ENCODE measurements at regions of chr1 and their contacts with region 1.

Region 1: DNA sequence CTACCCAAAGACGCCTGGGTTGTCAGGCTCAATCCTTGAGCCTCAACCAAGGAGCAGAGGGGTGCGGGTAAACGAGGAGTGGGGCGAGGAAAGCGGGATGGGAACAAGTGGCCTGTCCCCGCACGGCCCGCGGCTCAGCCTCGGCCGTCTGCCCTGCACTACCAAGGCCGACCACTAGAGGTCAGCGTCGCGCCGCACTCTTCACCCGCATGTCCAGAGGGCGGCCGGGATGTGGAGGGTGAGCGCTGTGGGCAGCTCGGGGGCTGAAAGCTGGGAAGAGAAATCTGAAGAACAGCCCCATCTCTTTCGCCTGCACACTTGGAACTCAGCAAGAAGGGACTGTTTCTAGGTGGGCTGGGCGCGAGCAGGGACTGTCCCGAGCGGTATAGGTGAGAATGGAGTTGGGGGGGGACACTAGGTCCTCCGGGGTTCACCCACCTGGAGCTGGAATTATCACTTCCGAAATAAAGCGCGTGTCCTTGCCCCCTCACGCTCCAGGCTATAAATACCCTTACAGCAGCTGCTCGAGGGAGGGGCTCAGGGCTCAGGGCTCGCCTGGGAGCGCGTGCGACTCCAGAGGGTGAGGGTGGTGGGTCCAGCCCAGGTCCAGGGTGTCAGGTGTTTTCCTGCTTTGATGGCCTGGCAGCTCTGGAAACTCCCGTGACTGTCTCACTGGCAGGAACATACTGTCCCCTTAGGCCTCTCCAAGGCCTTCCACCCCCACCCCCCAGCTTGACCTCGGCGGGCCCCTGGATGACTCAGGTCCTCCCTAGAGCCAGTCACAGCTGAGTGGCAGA is 9.8 kb downstream of the SLC30A2 start:
- DNase-seq: peak; percentile 84
- ATAC-seq: peak; percentile 73
- H3K4me3 Mint-ChIP-seq: peak overlapping the region; percentile 96
- H3K27ac Mint-ChIP-seq: peak overlapping the region; percentile 78
- H3K4me1 Mint-ChIP-seq: peaks cover 11% of the 10 kb centered on the region
- H3K27me3 Mint-ChIP-seq: peaks cover 6% of the 10 kb centered on the region
- CTCF ChIP-seq: peak; percentile 98

Region 2: DNA sequence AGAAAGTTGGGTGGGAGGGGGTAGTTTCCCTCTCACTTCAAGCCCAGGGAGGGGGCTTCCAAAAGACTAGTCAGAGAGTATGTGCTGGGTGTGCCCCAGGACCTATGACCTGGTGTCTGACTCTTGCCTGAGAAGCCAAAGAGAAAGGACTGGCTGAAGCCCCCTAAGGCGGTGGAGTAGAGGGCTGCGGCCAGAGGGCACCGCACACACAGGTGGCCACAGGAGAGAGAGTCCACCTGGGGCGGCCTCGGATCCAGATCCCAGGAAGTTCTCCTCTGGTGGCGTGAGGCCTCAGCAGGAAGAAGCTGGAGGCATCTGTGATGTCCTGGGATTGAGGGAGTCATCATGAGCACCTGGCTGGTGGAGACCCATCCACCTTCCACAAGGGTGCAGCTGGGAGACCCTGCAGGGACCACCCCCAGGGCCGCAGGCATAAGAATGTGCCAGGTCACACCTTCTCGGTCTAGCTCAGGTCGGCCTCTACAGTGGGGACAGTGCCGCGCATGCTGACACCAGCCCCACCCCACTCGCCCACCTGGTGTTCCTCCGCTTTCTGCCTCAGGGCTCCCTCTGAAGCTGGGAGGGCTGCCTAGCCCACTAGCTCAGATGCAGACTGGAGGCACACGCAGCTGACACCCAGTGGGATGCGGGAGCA is 155.0 kb before region 1 on chr1:
- CTCF ChIA-PET with region 1: no interaction called
- POLR2A ChIA-PET with region 1: no interaction called
- intact Hi-C with region 1: no loop called
- DNase-seq: no peak
- ATAC-seq: no peak
- H3K4me3 Mint-ChIP-seq: no peak overlapping the region
- H3K27ac Mint-ChIP-seq: no peak overlapping the region
- H3K4me1 Mint-ChIP-seq: peaks cover 1% of the 10 kb centered on the region
- H3K27me3 Mint-ChIP-seq: no peaks in the 10 kb centered on the region
- CTCF ChIP-seq: no peak

Region 3: GRCh38 chr1:25997828-25998761 is 38.1 kb before region 1 on chr1 and contains the start of gene PAFAH2:
- CTCF ChIA-PET with region 1: interaction called, 3 read pairs
- POLR2A ChIA-PET with region 1: no interaction called
- intact Hi-C with region 1: loop called (anchors 1 kb)
- DNase-seq: peak; percentile 85
- ATAC-seq: peak; percentile 98
- H3K4me3 Mint-ChIP-seq: peak within 1 kb of the TSS; percentile 95
- H3K27ac Mint-ChIP-seq: peak within 1 kb of the TSS; percentile 95
- H3K4me1 Mint-ChIP-seq: peaks cover 18% of the 10 kb centered on the region
- H3K27me3 Mint-ChIP-seq: no peaks in the 10 kb centered on the region
- CTCF ChIP-seq: peak; percentile 89
- total RNA-seq, gene PAFAH2: 5.4 and 9.2 TPM in 2 replicates

Region 4: GRCh38 chr1:26049531-26050247 is 13.5 kb after region 1 on chr1:
- CTCF ChIA-PET with region 1: no interaction called
- POLR2A ChIA-PET with region 1: no interaction called
- intact Hi-C with region 1: no loop called
- DNase-seq: no peak
- ATAC-seq: no peak
- H3K4me3 Mint-ChIP-seq: no peak overlapping the region
- H3K27ac Mint-ChIP-seq: no peak overlapping the region
- H3K4me1 Mint-ChIP-seq: no peaks in the 10 kb centered on the region
- H3K27me3 Mint-ChIP-seq: peaks cover 56% of the 10 kb centered on the region
- CTCF ChIP-seq: no peak

Region 5: DNA sequence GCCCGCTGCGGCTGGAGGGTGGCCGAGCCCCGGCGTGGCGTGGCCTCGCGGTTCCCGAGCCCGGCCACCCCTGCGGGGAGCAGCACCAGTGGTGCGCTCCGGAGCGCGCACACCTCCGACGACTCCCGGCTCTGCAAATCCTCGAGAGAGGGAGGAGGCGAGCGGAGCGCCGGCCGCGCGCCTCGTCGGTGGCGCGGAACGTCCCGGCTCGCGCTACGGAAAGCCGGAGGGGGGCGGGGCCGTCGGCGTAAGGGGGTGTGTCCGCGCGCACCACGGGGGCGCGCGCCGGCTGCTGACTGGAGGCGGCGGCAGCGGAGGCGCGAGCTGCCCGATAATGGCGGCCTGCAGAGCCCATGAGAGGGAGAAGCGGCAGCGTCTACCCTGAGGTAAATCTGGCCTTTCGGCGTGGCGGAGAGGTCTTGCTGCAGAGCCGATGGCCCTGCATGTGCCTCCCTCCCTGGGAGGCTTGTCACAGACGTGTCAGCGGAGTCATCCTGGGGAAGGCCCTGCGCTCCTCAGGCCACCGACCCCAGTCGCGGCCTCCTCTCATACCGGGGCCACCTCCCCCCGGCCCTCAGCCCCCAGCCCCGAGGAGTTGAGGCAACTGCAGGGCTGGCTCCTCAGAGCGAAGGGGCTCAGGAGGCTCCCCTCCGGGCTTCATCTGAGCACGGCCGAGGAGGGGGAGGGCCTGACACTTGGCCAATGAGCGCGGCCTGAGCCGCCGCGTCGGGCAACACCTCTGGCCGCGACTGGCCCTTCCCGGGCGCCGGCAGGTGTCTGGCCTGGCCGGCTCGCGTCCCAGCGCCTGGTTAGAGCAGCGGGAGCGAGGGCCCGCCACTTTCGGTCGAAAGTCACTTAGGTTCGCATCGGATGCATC is 75.6 kb after region 1 on chr1 and contains the start of gene PDIK1L:
- CTCF ChIA-PET with region 1: no interaction called
- POLR2A ChIA-PET with region 1: no interaction called
- intact Hi-C with region 1: loop called (anchors 2 kb)
- DNase-seq: peak; percentile 90
- ATAC-seq: peak; percentile 80
- H3K4me3 Mint-ChIP-seq: peak within 1 kb of the TSS; percentile 94
- H3K27ac Mint-ChIP-seq: peak within 1 kb of the TSS; percentile 89
- H3K4me1 Mint-ChIP-seq: peaks cover 20% of the 10 kb centered on the region
- H3K27me3 Mint-ChIP-seq: no peaks in the 10 kb centered on the region
- CTCF ChIP-seq: no peak
- total RNA-seq, gene PDIK1L: 9.4 and 10.5 TPM in 2 replicates

Region 6: DNA sequence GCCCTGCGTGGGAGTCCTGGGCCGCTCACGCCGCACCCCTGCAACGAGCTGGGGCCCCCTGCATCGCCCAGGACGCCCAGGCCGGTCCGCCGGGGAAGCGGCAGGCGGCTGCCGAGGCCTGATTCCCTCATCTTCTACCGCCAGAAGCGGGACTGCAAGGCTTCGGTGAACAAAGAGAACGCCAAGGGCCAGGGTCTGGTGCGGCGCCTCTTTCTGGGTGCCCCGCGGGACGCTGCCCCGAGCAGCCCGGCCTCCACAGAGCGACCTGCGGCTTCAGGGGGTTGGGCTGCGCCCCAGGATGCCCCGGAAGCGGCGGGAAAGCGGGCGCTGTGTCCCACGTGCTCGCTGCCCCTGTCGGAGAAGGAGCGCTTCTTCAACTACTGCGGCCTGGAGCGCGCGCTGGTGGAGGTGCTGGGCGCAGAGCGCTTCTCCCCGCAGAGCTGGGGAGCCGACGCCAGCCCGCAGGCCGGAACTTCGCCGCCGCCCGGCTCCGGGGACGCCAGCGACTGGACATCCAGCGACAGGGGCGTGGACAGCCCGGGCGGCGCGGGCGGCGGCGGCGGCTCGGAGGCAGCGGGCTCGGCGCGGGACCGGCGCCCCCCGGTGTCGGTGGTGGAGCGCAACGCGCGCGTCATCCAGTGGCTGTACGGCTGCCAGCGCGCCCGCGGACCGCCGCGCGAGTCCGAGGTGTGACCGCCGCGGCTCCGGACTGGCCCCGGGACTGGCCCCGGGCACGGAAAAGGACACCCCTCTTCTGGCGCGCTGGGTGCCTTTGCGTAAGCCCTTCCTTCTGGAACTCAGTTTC is 125.5 kb after region 1 on chr1:
- CTCF ChIA-PET with region 1: no interaction called
- POLR2A ChIA-PET with region 1: no interaction called
- intact Hi-C with region 1: loop called (anchors 5 kb)
- DNase-seq: peak; percentile 54
- ATAC-seq: peak; percentile 64
- H3K4me3 Mint-ChIP-seq: peak overlapping the region; percentile 59
- H3K27ac Mint-ChIP-seq: no peak overlapping the region
- H3K4me1 Mint-ChIP-seq: peaks cover 13% of the 10 kb centered on the region
- H3K27me3 Mint-ChIP-seq: peaks cover 26% of the 10 kb centered on the region
- CTCF ChIP-seq: no peak

Region 7: GRCh38 chr1:26472901-26473845 is 437.0 kb after region 1 on chr1:
- CTCF ChIA-PET with region 1: no interaction called
- POLR2A ChIA-PET with region 1: no interaction called
- intact Hi-C with region 1: loop called (anchors 2 kb)
- DNase-seq: peak; percentile 95
- ATAC-seq: peak; percentile 78
- H3K4me3 Mint-ChIP-seq: peak overlapping the region; percentile 88
- H3K27ac Mint-ChIP-seq: peak overlapping the region; percentile 84
- H3K4me1 Mint-ChIP-seq: peaks cover 58% of the 10 kb centered on the region
- H3K27me3 Mint-ChIP-seq: no peaks in the 10 kb centered on the region
- CTCF ChIP-seq: no peak

Measured in activated B cell treated with CpG ODN at 0.5 μM for 24 hours (primary cell).